Activated CD4-positive, alpha-beta T cell treated with anti-CD3 and anti-CD28 coated beads for 36 hours (primary cell): ENCODE measurements at regions of chr5 and their contacts with region 1.

Region 1: GRCh38 chr5:102832445-102832844 is 77.3 kb downstream of the PAM start:
- DNase-seq: no peak
- ATAC-seq: no peak
- H3K4me3 Mint-ChIP-seq: no peak overlapping the region
- H3K27ac Mint-ChIP-seq: no peak overlapping the region
- H3K4me1 Mint-ChIP-seq: peaks cover 14% of the 10 kb centered on the region
- H3K27me3 Mint-ChIP-seq: no peaks in the 10 kb centered on the region

Region 2: GRCh38 chr5:103375350-103375749 is 542.9 kb after region 1 on chr5:
- CTCF ChIA-PET with region 1: no interaction called
- POLR2A ChIA-PET with region 1: no interaction called
- intact Hi-C with region 1: loop called in 1 of 2 experiments (anchors 5 kb)
- DNase-seq: no peak
- ATAC-seq: no peak
- H3K4me3 Mint-ChIP-seq: no peak overlapping the region
- H3K27ac Mint-ChIP-seq: no peak overlapping the region
- H3K4me1 Mint-ChIP-seq: no peaks in the 10 kb centered on the region
- H3K27me3 Mint-ChIP-seq: peaks cover 12% of the 10 kb centered on the region

Region 3: DNA sequence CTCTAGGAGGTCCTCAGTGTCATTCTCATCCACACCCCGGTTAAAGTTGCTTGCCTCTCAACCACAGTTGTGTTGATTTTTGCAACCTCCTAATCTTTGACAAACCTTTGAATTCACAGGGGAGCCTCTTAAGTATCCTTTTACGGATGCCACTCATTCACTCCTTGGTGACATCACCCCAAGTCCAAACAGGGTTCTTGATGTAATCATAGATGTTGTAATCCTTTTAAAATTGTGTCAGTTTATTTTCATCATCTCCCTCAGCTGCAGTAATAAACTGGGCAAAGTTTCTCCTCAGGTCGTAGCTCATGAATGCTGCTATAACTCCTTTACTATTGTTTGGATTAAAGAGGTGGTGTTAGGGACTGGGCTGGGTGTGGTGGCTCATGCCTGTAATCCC is 1367.3 kb after region 1 on chr5:
- CTCF ChIA-PET with region 1: no interaction called
- POLR2A ChIA-PET with region 1: no interaction called
- intact Hi-C with region 1: no loop called
- DNase-seq: no peak
- ATAC-seq: no peak
- H3K4me3 Mint-ChIP-seq: no peak overlapping the region
- H3K27ac Mint-ChIP-seq: no peak overlapping the region
- H3K4me1 Mint-ChIP-seq: no peaks in the 10 kb centered on the region
- H3K27me3 Mint-ChIP-seq: no peaks in the 10 kb centered on the region